GM12878 (cell line): ENCODE measurements at regions of chr12 and their contacts with region 1.

Region 1: DNA sequence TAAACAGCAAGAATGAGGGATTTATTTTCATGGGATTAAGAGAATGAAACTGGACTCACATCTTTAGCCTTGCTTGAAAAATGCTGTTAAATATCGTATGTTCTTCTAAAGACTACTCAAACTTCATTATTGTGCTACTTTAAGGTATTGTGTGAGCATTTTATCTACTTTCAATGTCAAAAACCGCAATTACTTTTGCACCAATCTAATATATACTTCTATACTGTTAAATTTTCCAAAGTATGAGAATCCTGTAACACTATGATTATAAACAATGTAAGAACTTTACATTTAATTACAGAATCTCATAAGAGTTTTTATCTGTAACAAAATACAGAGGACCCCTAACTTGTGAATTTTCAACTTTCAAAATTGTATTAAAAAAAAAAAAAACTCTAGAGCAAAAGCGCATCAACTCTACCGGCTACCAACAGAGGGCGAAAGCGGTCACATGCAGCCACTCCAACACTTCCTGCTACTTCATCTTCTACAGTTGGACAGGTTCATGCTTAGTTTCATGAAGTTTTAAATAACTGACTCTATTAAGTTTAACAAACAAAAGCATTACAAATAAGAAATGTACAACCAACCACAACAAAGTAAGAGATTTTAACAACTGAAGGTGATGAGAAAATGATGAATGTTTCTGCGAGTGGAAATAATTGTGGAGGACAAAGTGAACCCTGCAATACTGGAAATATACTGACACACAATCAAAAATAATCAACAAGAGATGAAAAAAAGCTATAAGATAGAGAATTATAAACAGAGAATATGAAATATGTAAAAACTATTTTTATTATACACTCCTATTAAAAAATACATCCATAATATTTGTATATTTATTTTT is 210.9 kb downstream of the MED13L start:
- DNase-seq: no peak
- ATAC-seq: peak; percentile 84
- H3K4me3 ChIP-seq: no peak overlapping the region
- H3K27ac ChIP-seq: no peak overlapping the region
- H3K4me1 ChIP-seq: no peaks in the 10 kb centered on the region
- H3K27me3 ChIP-seq: no peaks in the 10 kb centered on the region
- CTCF ChIP-seq: peak; percentile 77 to 89 (median 87)
- EP300 ChIP-seq: no peak
- POLR2A ChIP-seq: no peak
- RAD21 ChIP-seq: peak; percentile 72

Region 2: DNA sequence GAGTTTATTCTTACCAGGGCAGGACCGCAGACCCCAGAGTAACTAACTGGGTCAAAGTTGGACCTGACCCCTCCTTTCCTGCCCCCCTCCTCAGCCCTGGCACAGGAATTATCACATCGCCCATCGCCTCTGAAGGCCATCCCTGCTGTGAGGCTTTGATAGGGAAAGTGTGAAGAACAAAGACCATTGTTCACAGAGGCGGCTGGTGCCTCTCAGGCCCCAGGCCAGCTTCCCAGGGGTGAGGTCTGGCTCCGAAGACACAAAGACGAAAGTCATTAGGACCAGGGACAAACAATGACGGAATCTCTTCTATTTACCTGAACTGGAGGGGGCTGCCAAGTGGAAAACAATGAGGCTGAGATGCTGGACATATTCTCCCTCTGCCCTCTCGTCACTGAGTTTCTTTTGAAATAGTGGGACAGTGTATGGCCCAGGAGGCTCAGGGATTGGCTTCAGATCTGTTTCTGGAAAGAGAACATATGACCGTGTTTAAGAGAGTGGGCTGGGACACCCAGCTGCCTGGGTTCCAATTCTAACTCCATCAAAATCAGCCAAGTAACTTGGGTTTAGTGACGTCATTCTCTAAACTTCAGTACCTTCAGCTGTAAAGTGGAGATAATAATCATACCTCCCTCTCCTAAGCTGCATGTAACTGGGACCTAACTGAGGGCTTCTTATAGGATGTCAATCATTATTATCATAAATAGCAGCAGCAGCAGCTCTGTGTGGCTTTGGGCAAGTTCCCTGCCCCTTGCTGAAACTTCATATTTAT is 558.5 kb before region 1 on chr12:
- CTCF ChIA-PET with region 1: no interaction called
- POLR2A ChIA-PET with region 1: no interaction called
- RAD21 ChIA-PET with region 1: no interaction called
- SMC1A ChIA-PET with region 1: no interaction called
- in situ Hi-C with region 1: no loop called
- intact Hi-C with region 1: no loop called
- DNase-seq: no peak
- ATAC-seq: no peak
- H3K4me3 ChIP-seq: no peak overlapping the region
- H3K27ac ChIP-seq: no peak overlapping the region
- H3K4me1 ChIP-seq: peaks cover 20% of the 10 kb centered on the region
- H3K27me3 ChIP-seq: no peaks in the 10 kb centered on the region
- CTCF ChIP-seq: no peak
- EP300 ChIP-seq: no peak
- POLR2A ChIP-seq: no peak
- RAD21 ChIP-seq: no peak

Region 3: GRCh38 chr12:116015525-116015924 is 51.1 kb before region 1 on chr12:
- CTCF ChIA-PET with region 1: interaction called, 6 read pairs
- POLR2A ChIA-PET with region 1: no interaction called
- RAD21 ChIA-PET with region 1: no interaction called
- SMC1A ChIA-PET with region 1: no interaction called
- in situ Hi-C with region 1: no loop called
- intact Hi-C with region 1: loop called (anchors 5 kb)
- DNase-seq: no peak
- ATAC-seq: peak; percentile 84
- H3K4me3 ChIP-seq: no peak overlapping the region
- H3K27ac ChIP-seq: no peak overlapping the region
- H3K4me1 ChIP-seq: no peaks in the 10 kb centered on the region
- H3K27me3 ChIP-seq: no peaks in the 10 kb centered on the region
- CTCF ChIP-seq: peak; percentile 36 to 55 (median 38); a peak in 4 of 6 replicates
- EP300 ChIP-seq: no peak
- POLR2A ChIP-seq: no peak
- RAD21 ChIP-seq: peak; percentile 85

Region 4: GRCh38 chr12:116080415-116080814 is 13.8 kb after region 1 on chr12:
- CTCF ChIA-PET with region 1: no interaction called
- POLR2A ChIA-PET with region 1: no interaction called
- RAD21 ChIA-PET with region 1: no interaction called
- SMC1A ChIA-PET with region 1: no interaction called
- in situ Hi-C with region 1: no loop called
- intact Hi-C with region 1: no loop called
- DNase-seq: no peak
- ATAC-seq: peak; percentile 37
- H3K4me3 ChIP-seq: no peak overlapping the region
- H3K27ac ChIP-seq: no peak overlapping the region
- H3K4me1 ChIP-seq: no peaks in the 10 kb centered on the region
- H3K27me3 ChIP-seq: no peaks in the 10 kb centered on the region
- CTCF ChIP-seq: no peak
- EP300 ChIP-seq: no peak
- POLR2A ChIP-seq: no peak
- RAD21 ChIP-seq: no peak

Region 5: GRCh38 chr12:116194935-116195431 is 128.4 kb after region 1 on chr12:
- CTCF ChIA-PET with region 1: no interaction called
- POLR2A ChIA-PET with region 1: no interaction called
- RAD21 ChIA-PET with region 1: no interaction called
- SMC1A ChIA-PET with region 1: no interaction called
- in situ Hi-C with region 1: no loop called
- intact Hi-C with region 1: loop called (anchors 2 kb)
- DNase-seq: peak; percentile 79
- ATAC-seq: peak; percentile 89
- H3K4me3 ChIP-seq: peak overlapping the region; percentile 52
- H3K27ac ChIP-seq: peak overlapping the region; percentile 83
- H3K4me1 ChIP-seq: peaks cover 22% of the 10 kb centered on the region; the same call in 1 of the 2 replicates
- H3K27me3 ChIP-seq: no peaks in the 10 kb centered on the region
- CTCF ChIP-seq: peak; percentile 11 to 54 (median 24); a peak in 3 of 6 replicates
- EP300 ChIP-seq: peak; percentile 74 to 88; a peak in 3 of 4 replicates
- POLR2A ChIP-seq: no peak
- RAD21 ChIP-seq: peak; percentile 71